ENCODE measurements at regions of chr7 and their contacts with region 1.

Region 1: DNA sequence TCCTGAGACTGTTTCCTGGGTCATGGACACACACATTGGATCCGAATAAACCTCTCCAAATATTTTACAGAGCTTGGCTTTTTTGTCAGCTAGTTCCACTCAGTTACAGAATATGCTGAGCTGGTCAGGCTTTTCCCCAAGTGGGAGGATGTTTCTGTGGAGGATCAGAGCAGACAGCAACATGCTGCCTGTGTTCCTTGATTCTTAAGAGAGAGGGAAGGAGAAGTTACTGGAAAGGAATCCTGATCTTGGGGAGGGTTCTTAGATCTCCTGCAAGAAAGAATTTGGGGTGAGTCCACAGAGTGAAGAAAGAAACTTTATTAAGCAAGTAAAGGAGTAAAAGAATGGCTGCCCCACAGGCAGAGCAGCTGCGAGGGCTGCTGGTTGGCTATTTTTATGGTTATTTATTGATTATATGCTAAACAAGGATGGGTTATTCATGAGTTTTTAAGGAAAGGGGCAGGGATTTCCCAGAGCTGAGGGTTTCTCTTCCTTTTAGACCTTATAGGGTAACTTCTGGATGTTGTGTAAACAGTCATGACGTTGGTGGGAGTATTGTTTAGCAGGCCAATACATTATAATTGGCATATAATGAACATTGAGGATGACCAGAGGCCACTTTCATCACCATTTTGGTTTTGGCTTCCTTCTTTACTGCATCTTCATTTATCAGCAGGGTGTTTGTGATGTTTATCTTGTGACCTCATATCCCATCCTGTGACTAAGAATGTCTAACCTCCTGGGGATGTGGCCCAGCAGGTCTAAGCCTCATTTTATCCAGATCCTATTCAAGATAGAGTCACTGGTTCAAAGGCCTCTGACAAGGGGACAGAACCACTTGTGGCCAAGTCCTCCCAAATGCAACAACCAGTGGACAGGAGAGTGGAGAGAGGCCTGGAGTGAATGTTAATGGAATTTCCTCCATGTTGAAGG is 77.1 kb upstream of the RPA3 start:
- DNase-seq: peak; percentile 66 to 79
- H3K4me3 ChIP-seq: no peak overlapping the region
- H3K4me3 Mint-ChIP-seq: peak overlapping the region; percentile 38
- H3K27ac Mint-ChIP-seq: peak overlapping the region; percentile 91
- H3K4me1 ChIP-seq: peaks cover 37% of the 10 kb centered on the region
- H3K4me1 Mint-ChIP-seq: peaks cover 27% of the 10 kb centered on the region
- H3K27me3 ChIP-seq: no peaks in the 10 kb centered on the region
- H3K27me3 Mint-ChIP-seq: no peaks in the 10 kb centered on the region
- CTCF ChIP-seq: no peak

Region 2: DNA sequence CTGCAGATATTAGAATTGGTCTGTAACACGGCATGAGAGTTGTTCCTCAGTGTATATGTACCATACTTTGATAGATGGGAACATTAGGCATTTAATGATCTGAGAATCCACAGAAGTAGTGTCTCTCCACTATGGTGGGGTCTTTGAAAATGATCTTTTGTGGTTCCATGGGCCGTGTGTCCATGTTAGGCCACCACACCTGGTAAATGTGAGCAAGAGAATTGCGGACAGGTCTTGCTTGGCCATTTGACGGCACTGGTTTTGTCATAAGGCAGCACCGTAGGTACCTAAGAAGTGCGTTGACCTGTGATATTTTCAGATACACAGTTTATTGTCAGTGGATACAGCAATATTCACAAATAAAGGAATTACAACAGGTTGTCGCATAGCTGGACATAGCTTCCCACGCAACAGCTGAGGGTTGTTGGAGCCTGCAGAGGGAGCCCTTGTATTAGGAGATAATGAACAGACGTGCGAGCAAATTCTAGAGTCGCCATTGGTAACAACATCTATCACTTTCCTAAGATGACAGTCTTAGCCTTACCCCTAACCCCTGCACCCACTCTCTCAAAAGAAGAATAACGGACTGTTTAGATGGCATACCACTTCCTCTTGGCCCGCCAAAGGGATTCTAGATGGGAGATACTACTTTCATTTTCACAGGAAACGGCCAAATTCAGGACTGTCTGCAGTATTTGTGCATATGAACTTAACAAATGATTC is 371.2 kb before region 1 on chr7:
- CTCF ChIA-PET with region 1: no interaction called
- POLR2A ChIA-PET with region 1: no interaction called
- intact Hi-C with region 1: no loop called
- DNase-seq: peak; percentile 62 to 75
- H3K4me3 ChIP-seq: no peak overlapping the region
- H3K4me3 Mint-ChIP-seq: no peak overlapping the region
- H3K27ac Mint-ChIP-seq: no peak overlapping the region
- H3K4me1 ChIP-seq: no peaks in the 10 kb centered on the region
- H3K4me1 Mint-ChIP-seq: no peaks in the 10 kb centered on the region
- H3K27me3 ChIP-seq: no peaks in the 10 kb centered on the region
- H3K27me3 Mint-ChIP-seq: no peaks in the 10 kb centered on the region
- CTCF ChIP-seq: peak; percentile 86 to 93

Region 3: GRCh38 chr7:7861211-7861633 is 65.8 kb after region 1 on chr7:
- CTCF ChIA-PET with region 1: no interaction called
- POLR2A ChIA-PET with region 1: no interaction called
- intact Hi-C with region 1: loop called (anchors 5 kb)
- DNase-seq: peak in 1 of 2 experiments; percentile 3
- H3K4me3 ChIP-seq: no peak overlapping the region
- H3K4me3 Mint-ChIP-seq: no peak overlapping the region
- H3K27ac Mint-ChIP-seq: no peak overlapping the region
- H3K4me1 ChIP-seq: peaks cover 8% of the 10 kb centered on the region; the same call in 1 of the 2 replicates
- H3K4me1 Mint-ChIP-seq: no peaks in the 10 kb centered on the region
- H3K27me3 ChIP-seq: no peaks in the 10 kb centered on the region
- H3K27me3 Mint-ChIP-seq: no peaks in the 10 kb centered on the region
- CTCF ChIP-seq: no peak

Region 4: DNA sequence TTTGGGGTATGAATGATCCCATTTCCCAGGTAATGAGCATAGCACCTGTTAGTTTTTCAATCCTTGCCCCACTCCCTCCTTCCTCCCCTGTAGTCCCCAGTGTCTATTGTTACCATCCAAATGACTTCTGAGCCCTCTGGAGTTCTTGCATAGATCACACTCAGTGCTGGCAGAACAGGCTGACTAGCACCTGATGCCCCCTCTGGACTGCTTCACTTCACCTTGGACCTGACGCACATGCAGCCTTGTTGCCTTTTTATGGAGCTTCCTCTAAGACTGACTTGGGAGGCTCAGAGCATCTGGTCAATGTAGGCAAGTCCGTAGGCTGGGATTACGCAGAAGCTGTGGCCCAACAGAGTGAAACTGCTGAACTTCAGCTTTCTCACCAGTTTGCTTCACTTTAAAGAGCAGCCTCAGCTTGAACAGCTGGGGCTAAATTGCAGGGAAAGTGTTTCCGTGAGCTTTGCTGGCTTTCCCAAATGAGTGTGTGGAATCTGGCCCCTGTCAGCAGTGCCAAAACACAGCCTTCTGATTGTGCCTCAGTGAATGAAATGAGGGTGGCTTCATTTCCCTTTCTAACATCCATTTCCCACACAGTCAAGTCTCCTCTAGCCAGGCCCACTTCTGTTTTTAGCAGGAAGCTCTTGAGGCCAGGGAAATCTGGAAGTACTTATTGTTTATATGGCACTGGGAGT is 686.4 kb after region 1 on chr7:
- CTCF ChIA-PET with region 1: no interaction called
- POLR2A ChIA-PET with region 1: no interaction called
- intact Hi-C with region 1: no loop called
- DNase-seq: no peak
- H3K4me3 ChIP-seq: no peak overlapping the region
- H3K4me3 Mint-ChIP-seq: no peak overlapping the region
- H3K27ac Mint-ChIP-seq: no peak overlapping the region
- H3K4me1 ChIP-seq: no peaks in the 10 kb centered on the region
- H3K4me1 Mint-ChIP-seq: no peaks in the 10 kb centered on the region
- H3K27me3 ChIP-seq: no peaks in the 10 kb centered on the region
- H3K27me3 Mint-ChIP-seq: peaks cover 2% of the 10 kb centered on the region
- CTCF ChIP-seq: no peak